ENCODE measurements at regions of chr1 and their contacts with region 1.

Region 1: DNA sequence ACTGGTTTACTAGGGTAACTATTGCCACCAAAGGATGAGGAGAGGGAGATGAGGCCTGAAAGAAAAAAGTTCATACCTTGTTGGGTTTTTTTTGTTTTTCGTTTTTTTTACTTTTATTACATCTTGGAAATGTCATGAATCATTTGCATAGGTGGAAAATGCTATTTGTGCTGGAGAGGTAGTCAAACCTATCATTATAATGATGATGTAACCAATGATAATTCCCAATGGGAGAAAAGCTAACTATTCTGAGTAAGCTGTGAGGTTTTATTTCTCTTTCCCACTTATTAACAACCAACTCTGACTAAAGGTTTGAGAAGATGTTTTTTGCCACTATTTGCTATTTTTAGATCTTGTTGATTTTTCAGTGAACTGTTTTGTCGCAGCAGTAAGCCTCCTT is 29.0 kb downstream of the SH3GLB1 start:
- DNase-seq: no peak
- H3K4me3 ChIP-seq: no peak overlapping the region
- H3K27ac ChIP-seq: no peak overlapping the region
- H3K4me1 ChIP-seq: no peaks in the 10 kb centered on the region
- H3K27me3 ChIP-seq: no peaks in the 10 kb centered on the region
- CTCF ChIP-seq: no peak
- POLR2A ChIP-seq: no peak

Region 2: DNA sequence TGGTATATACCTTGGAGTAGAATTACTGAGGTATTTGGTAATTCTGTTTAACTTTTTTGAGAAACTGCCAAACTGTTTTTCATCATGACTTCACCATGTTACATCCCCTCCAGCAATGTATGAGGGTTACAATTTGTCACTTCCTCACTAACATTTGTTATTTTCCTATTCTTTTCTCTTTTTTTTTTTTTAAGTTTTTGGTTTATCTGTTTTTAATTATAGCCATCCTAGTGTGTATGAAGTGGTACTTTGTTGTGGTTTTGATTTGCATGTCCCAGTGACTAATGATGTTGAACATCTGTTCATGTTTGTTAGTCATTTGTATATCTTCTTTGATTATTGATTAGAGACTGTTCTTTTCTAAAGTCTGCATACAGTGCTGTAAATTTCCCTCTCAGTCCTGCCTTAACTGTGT is 328.4 kb after region 1 on chr1:
- CTCF ChIA-PET with region 1: no interaction called
- POLR2A ChIA-PET with region 1: no interaction called
- dilution Hi-C with region 1: no loop called
- intact Hi-C with region 1: no loop called
- DNase-seq: peak; percentile 8
- H3K4me3 ChIP-seq: no peak overlapping the region
- H3K27ac ChIP-seq: no peak overlapping the region
- H3K4me1 ChIP-seq: no peaks in the 10 kb centered on the region
- H3K27me3 ChIP-seq: no peaks in the 10 kb centered on the region
- CTCF ChIP-seq: no peak
- POLR2A ChIP-seq: no peak

Region 3: DNA sequence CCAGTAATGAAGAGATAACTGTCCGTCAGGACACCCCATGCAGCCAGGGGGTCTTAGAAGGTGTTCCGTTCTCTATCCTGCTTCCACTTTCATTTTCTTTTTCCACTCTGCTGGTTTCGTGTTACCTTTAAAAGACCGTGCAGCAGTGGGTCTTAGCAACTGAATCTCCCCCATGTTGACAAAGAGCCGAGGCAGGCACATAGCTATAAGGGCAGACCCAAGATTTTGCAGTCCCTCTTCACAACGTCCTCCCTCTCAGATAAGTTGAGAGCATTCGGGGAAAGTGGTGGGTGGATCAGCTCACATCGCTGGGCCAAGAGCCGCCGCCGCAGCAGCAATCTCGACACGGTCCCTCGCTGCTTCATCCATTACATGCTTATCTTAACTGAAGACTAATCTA is 950.9 kb after region 1 on chr1:
- CTCF ChIA-PET with region 1: no interaction called
- POLR2A ChIA-PET with region 1: no interaction called
- dilution Hi-C with region 1: no loop called
- intact Hi-C with region 1: loop called (anchors 5 kb)
- DNase-seq: peak; percentile 55
- H3K4me3 ChIP-seq: peak overlapping the region; percentile 36 to 74 (median 42)
- H3K27ac ChIP-seq: peak overlapping the region; percentile 6
- H3K4me1 ChIP-seq: peaks cover 23% of the 10 kb centered on the region
- H3K27me3 ChIP-seq: no peaks in the 10 kb centered on the region
- CTCF ChIP-seq: no peak
- POLR2A ChIP-seq: no peak

Measured in endothelial cell of umbilical vein (primary cell).